ENCODE measurements at regions of chr12 and their contacts with region 1.

Region 1: GRCh38 chr12:56987551-56988053 is 18.7 kb downstream of the ZBTB39 start:
- DNase-seq: peak; percentile 59 to 78 (median 65)
- H3K4me3 ChIP-seq: no peak overlapping the region
- H3K4me3 Mint-ChIP-seq: peak overlapping the region in 5 of 7 donors; percentile 23 to 79 (median 46)
- H3K27ac ChIP-seq: peak overlapping the region; percentile 14
- H3K27ac Mint-ChIP-seq: peak overlapping the region in 2 of 8 donors; percentile 63 to 78
- H3K4me1 ChIP-seq: peaks cover 9% of the 10 kb centered on the region
- H3K4me1 Mint-ChIP-seq: peaks cover 5 to 8% (median 6%) of the 10 kb centered on the region in 3 donors
- H3K27me3 ChIP-seq: no peaks in the 10 kb centered on the region
- H3K27me3 Mint-ChIP-seq: peaks cover 0 to 3% of the 10 kb centered on the region in 2 donors

Region 2: GRCh38 chr12:57005980-57006808 is 18.6 kb after region 1 on chr12 and contains the start of gene ZBTB39:
- CTCF ChIA-PET with region 1: interaction called, 23 read pairs
- POLR2A ChIA-PET with region 1: no interaction called
- DNase-seq: peak; percentile 61 to 78 (median 65)
- H3K4me3 ChIP-seq: peak within 1 kb of the TSS; percentile 66
- H3K4me3 Mint-ChIP-seq: peak within 1 kb of the TSS; percentile 88 to 96 (median 92)
- H3K27ac ChIP-seq: peak within 1 kb of the TSS; percentile 55
- H3K27ac Mint-ChIP-seq: peak within 1 kb of the TSS; percentile 84 to 96 (median 90)
- H3K4me1 ChIP-seq: peaks cover 56% of the 10 kb centered on the region
- H3K4me1 Mint-ChIP-seq: peaks cover 47 to 68% (median 63%) of the 10 kb centered on the region in 3 donors
- H3K27me3 ChIP-seq: no peaks in the 10 kb centered on the region
- H3K27me3 Mint-ChIP-seq: no peaks in the 10 kb centered on the region
- total RNA-seq, gene ZBTB39: 9.1 to 9.3 TPM